ENCODE measurements at regions of chr1 and their contacts with region 1.

Region 1: GRCh38 chr1:221979461-221980032 is 237.7 kb upstream of the DUSP10 start:
- DNase-seq: peak; percentile 54
- H3K4me3 Mint-ChIP-seq: no peak overlapping the region
- H3K27ac Mint-ChIP-seq: no peak overlapping the region
- H3K4me1 Mint-ChIP-seq: peaks cover 21% of the 10 kb centered on the region
- H3K27me3 Mint-ChIP-seq: no peaks in the 10 kb centered on the region
- CTCF ChIP-seq: peak; percentile 72

Region 2: DNA sequence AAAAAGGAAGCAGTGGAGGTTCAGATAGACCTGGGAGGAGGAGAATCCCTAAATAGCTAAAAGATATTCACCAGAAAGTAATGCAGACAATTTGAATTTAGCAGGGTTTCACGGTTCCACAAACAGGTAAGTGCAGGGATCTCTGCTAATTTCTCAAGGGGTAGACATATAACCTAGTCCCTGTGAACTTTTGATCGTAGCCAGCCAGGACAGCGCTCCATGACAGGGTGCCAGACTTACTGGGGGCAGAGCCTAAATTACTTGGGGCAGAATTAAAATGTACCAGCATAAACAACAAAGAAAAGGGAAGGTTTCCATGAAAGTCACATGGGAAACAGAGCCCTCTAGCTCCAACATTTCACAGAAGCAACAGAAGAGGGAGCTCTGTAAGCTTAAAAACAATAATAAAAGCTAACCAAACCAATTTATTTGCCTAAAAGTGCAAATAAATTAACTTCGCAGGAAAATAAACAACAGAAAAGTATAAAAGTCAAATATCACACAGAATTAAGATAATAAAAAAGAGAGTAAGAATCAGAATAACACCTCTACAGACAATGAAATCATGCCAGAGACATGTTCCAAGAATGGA is 435.9 kb before region 1 on chr1:
- CTCF ChIA-PET with region 1: no interaction called
- POLR2A ChIA-PET with region 1: no interaction called
- intact Hi-C with region 1: loop called (anchors 1 kb)
- DNase-seq: peak; percentile 56
- H3K4me3 Mint-ChIP-seq: no peak overlapping the region
- H3K27ac Mint-ChIP-seq: peak overlapping the region; percentile 44
- H3K4me1 Mint-ChIP-seq: peaks cover 15% of the 10 kb centered on the region
- H3K27me3 Mint-ChIP-seq: no peaks in the 10 kb centered on the region
- CTCF ChIP-seq: peak; percentile 86

Region 3: DNA sequence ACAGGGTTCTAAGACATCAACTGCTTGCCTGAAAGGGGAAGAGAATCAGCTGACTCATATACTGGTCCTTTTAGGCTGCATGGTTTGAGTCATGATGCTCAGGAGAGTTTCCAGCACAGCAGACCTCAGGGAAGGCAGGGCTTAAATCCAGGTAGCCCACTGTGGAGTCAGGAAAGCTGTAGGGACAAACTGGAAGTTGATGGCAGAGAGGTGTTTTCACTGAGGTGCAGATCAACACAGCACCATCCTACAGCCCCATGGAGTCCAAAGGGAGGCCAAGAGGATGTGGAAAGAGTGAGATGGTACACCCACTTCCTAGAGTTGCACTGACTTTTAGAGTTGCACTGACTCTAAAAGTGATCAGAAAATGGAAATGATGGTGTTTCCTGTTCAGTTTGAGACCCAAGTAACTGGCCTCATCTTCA is 14.7 kb after region 1 on chr1:
- CTCF ChIA-PET with region 1: interaction called, 21 read pairs
- POLR2A ChIA-PET with region 1: interaction called, 9 read pairs
- intact Hi-C with region 1: no loop called
- DNase-seq: no peak
- H3K4me3 Mint-ChIP-seq: no peak overlapping the region
- H3K27ac Mint-ChIP-seq: no peak overlapping the region
- H3K4me1 Mint-ChIP-seq: peaks cover 44% of the 10 kb centered on the region
- H3K27me3 Mint-ChIP-seq: no peaks in the 10 kb centered on the region
- CTCF ChIP-seq: no peak

Measured in MCF 10A (cell line).